Activated CD4-positive, alpha-beta memory T cell treated with anti-CD3 and anti-CD28 coated beads for 36 hours (primary cell): ENCODE measurements at regions of chr4 and their contacts with region 1.

Region 1: DNA sequence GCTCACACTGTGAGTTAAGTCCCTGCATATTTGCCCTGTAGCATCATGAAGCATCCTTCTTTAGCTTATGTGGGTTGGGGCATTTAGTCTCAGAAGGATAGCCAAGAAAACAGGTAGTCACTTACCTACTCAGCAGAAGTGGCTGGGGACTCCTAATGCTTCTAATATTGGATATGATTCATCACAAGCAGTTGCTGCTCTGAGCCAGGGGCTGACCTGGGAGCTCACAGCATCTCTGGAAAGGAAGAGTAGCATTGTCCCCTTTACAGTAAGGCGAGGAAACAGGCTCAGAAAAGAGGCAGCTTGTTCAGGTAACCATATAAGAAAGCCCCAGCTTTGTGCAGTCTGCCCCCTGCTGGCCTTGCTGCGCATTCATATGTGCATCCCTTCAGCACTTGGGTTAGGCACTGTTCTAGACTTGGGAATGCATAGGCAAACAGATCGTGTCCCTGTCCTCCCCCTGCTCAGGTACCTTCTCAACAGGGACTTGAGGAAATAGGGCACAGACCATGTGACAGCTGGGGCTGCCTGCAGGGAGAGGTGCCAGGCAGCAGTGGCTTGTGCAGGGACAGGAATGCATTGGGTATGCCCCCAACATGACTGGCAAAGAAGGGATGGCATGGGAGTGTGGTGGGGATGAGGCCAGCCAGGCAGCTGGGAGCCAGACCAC is 35.7 kb upstream of the TBC1D14 start:
- DNase-seq: peak; percentile 86
- H3K4me3 Mint-ChIP-seq: no peak overlapping the region
- H3K27ac Mint-ChIP-seq: no peak overlapping the region
- H3K4me1 Mint-ChIP-seq: no peaks in the 10 kb centered on the region
- H3K27me3 Mint-ChIP-seq: no peaks in the 10 kb centered on the region

Region 2: GRCh38 chr4:6673660-6674499 is 200.0 kb before region 1 on chr4:
- CTCF ChIA-PET with region 1: interaction called, 28 read pairs
- POLR2A ChIA-PET with region 1: interaction called, 3 read pairs
- intact Hi-C with region 1: no loop called
- DNase-seq: peak; percentile 96
- H3K4me3 Mint-ChIP-seq: peak overlapping the region; percentile 95
- H3K27ac Mint-ChIP-seq: peak overlapping the region; percentile 93
- H3K4me1 Mint-ChIP-seq: peaks cover 43% of the 10 kb centered on the region
- H3K27me3 Mint-ChIP-seq: peaks cover 2% of the 10 kb centered on the region

Region 3: DNA sequence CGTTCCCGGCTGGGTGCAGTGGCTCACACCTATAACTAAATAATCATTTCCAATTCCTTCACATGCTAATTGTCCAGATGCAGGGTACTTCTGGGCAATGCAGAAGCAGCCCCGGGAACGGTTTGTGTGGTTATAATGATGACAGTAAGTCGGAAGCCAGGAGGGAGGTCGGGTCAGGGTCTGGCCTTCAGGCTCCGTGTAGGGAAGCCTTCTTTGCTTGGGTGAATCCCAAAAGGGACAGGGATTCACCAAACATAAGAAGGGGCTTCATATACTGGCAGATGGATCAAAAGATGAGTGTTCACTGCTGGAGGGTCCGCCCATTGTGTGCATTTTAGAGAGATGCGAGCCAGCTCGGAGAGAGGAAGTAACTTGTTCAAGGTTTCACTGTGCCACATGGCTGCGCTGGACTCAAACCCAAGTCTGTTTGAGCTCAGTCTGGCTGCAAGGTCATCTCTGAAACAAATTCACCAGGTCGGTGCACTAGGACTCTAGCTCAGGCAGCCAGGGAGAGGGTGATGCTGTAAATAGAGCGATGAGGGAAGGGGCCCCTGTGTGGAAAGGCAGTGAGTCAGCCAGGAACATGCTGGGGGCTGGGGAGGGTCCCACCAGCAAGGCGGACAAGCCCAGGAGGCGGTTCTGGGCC is 96.2 kb before region 1 on chr4:
- CTCF ChIA-PET with region 1: interaction called, 11 read pairs
- POLR2A ChIA-PET with region 1: no interaction called
- intact Hi-C with region 1: no loop called
- DNase-seq: no peak
- H3K4me3 Mint-ChIP-seq: no peak overlapping the region
- H3K27ac Mint-ChIP-seq: peak overlapping the region; percentile 28
- H3K4me1 Mint-ChIP-seq: peaks cover 26% of the 10 kb centered on the region
- H3K27me3 Mint-ChIP-seq: no peaks in the 10 kb centered on the region

Region 4: DNA sequence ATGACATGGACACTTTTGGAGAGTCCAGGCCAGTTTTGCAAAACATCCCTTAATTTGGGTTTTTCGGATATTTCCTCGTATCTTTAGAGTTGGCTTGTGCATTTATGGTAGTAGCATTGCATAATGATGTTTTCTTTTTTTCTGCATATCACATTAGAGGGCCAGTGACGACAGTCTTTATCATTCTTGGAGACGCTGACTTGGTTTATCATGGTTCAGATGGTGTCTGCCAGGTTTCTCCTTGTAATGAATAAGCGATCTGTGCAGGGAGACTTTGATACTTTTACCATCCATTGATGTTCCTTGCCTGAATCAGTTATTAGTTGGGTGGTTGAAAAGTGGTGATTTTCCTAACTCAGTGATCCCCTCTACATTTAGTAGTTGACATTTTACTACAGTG is 44.8 kb before region 1 on chr4:
- CTCF ChIA-PET with region 1: interaction called, 15 read pairs
- POLR2A ChIA-PET with region 1: no interaction called
- intact Hi-C with region 1: no loop called
- DNase-seq: no peak
- H3K4me3 Mint-ChIP-seq: no peak overlapping the region
- H3K27ac Mint-ChIP-seq: no peak overlapping the region
- H3K4me1 Mint-ChIP-seq: peaks cover 25% of the 10 kb centered on the region
- H3K27me3 Mint-ChIP-seq: no peaks in the 10 kb centered on the region

Region 5: GRCh38 chr4:6885951-6886557 is 12.1 kb after region 1 on chr4:
- CTCF ChIA-PET with region 1: interaction called, 46 read pairs
- POLR2A ChIA-PET with region 1: no interaction called
- intact Hi-C with region 1: no loop called
- DNase-seq: peak; percentile 33
- H3K4me3 Mint-ChIP-seq: no peak overlapping the region
- H3K27ac Mint-ChIP-seq: no peak overlapping the region
- H3K4me1 Mint-ChIP-seq: peaks cover 2% of the 10 kb centered on the region
- H3K27me3 Mint-ChIP-seq: no peaks in the 10 kb centered on the region

Region 6: DNA sequence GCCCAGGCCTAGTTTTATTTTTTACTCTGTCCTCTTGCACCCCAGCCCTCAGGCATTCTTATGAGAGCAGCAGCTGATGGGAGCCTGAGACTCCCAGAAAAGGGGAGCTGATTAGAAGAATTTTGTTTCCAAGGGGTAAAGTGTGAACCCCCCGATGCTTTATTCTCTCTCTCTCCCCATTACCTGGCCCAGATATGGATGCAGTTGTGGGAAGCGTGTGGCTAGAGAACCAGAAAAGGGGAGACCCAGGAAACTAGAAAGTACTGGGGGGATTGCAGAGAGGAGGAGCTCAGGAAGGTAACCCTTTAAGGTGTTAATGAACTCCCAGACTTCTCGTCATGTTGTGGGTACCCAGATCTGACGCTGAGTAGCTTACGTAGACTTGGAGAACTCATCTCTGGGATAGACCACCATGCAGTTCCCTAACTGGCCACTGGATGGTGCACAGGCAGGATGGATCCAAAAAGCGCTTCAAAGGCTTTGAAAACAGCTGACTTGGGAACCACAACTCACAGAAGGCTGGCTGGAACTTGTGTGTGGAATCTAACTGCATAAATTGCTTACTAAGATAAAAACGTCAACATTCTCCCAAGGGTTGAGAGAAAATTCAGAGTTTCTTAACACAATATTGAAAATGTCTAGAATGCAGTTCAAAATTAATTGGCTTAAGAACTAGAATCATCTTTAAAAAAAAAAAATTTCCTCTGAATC is 100.4 kb after region 1 on chr4:
- CTCF ChIA-PET with region 1: interaction called, 13 read pairs
- POLR2A ChIA-PET with region 1: no interaction called
- intact Hi-C with region 1: no loop called
- DNase-seq: peak; percentile 90
- H3K4me3 Mint-ChIP-seq: no peak overlapping the region
- H3K27ac Mint-ChIP-seq: peak overlapping the region; percentile 51
- H3K4me1 Mint-ChIP-seq: peaks cover 8% of the 10 kb centered on the region
- H3K27me3 Mint-ChIP-seq: no peaks in the 10 kb centered on the region

Region 7: DNA sequence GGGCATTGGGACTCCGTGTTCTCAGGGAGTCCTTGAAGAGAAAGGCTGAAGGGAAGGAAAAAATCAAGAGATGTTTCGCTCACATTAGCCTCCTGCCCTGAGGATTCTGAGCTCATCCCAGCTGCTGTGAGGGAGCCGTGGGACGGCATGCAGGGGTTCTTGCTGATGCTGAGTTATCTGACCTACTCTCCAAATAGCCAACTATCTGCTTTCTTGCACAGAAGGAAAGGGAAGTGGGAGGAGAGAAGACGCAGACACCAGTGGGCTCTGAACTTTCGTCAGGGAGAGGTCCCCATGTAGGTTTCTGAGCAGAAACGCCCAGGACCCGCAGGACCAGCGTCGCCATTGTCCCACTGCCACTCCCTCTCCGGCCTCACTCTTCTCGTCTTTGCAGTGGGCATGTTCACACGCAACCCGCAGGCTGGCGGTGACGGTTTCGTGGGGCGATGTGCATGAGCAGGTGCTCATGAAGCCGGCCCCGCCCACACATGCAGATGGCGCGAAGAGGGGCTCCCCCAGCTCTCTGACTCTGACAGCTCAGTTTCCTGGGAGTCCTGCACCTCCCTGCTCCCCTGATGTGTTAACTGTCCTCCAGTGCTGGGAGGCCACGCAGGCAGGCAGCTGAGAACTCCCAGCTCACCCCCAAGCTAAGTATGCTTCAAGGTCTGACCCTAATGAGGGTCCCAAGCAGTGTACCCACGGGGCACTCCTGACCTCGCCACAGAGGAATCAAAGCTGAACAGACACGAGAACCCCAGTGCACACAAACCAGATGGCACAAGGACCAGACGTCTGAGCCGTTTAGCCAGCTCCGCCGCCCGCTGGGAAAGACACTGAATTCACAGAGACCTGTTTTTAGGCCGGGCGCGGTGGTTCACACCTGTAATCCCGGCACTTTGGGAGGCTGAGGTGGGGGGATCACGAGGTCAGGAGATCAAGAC is 1298.3 kb after region 1 on chr4:
- CTCF ChIA-PET with region 1: no interaction called
- POLR2A ChIA-PET with region 1: no interaction called
- intact Hi-C with region 1: no loop called
- DNase-seq: peak; percentile 83
- H3K4me3 Mint-ChIP-seq: no peak overlapping the region
- H3K27ac Mint-ChIP-seq: no peak overlapping the region
- H3K4me1 Mint-ChIP-seq: peaks cover 5% of the 10 kb centered on the region
- H3K27me3 Mint-ChIP-seq: peaks cover 5% of the 10 kb centered on the region